ENCODE measurements at regions of chr1 and their contacts with region 1.

Region 1: DNA sequence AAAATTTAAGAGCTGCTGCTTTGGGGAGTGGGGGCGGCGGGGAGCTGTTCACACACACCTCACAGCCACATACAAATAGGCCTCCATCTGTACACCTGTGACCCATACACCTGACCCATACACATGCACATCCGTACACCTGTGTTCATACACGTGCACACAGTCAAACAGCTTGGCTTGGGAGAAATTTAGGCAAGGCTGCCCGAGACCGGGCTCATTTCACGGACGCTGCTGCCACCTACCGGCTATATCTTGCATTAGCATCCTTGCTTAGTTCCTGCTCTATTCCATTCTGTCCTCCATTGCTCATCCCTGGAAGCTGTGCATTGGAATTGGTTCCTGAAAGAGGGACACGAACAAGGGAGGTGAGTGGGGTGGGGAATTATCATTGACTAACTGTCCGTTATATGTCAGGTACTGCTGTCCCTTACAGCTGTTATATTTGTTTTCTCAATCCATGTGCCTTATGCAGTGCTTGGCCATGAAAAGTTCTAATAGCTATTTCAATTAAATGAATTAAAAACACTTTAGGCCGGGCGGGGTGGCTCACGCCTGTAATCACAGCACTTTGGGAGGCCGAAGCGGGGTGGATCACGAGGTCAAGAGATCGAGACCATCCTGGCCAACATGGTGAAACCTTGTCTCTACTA is 37.1 kb upstream of the EPB41 start:
- DNase-seq: peak; percentile 79
- CTCF ChIP-seq: peak; percentile 86

Region 2: DNA sequence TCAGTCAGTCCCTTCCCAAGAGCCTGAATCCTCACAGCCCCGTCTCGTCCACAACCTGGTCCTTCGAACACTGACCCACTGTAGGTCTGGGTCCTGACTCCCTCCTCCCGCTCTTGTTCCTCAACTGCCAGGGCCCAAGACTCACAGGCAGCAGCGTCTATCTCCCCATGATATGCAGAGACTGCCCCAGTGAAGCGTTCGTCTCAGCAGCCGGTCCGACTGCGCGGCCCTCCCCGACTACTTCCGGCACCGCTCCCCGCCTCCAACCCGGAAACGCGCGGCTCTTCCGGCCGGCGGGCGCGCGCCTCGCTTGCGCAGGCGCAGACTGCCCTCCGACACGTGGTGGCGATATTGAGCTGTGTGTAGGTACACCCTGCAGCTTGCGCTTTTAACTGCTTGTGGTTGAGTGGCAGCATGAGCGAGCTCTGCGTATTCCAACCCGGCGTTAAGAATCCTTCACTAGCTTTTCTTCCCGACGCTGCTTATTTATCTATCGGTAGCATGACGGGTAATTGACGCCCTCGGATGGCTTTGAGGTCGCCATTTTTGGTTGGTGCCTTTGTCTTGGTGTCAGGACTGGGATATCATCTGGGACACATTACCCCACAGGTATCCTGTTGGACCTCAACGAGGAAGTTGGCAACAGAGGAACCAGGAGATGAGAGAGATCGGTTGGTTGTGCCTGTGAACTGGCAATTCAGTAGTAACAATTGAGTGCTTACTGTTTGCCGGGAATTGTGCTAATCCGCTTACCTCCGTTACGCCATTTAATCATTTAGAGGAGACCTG is 234.2 kb before region 1 on chr1 and contains the start of gene TAF12:
- CTCF ChIA-PET with region 1: interaction called, 11 read pairs
- POLR2A ChIA-PET with region 1: interaction called, 5 read pairs
- DNase-seq: peak; percentile 90
- CTCF ChIP-seq: peak; percentile 56

Region 3: DNA sequence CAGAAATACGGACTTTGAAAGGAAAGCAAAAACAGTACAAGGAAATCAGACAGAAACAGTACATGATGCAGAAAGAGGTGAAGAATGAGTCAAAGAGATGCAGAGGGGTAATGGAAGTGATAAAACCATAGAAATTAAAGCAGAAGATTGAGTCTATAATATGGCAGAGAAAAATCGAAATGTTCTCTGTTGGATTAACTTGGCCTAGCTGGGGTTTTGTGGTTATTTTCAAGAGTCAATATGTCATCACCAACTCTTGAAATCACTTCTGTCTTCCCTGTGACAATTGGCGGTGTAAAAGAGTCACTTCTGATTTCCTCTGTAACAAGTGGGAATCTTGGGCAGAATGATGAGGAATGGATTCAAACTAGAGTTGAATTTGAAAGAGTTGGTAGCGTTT is 133.1 kb before region 1 on chr1:
- CTCF ChIA-PET with region 1: no interaction called
- POLR2A ChIA-PET with region 1: no interaction called
- DNase-seq: no peak
- CTCF ChIP-seq: no peak

Region 4: DNA sequence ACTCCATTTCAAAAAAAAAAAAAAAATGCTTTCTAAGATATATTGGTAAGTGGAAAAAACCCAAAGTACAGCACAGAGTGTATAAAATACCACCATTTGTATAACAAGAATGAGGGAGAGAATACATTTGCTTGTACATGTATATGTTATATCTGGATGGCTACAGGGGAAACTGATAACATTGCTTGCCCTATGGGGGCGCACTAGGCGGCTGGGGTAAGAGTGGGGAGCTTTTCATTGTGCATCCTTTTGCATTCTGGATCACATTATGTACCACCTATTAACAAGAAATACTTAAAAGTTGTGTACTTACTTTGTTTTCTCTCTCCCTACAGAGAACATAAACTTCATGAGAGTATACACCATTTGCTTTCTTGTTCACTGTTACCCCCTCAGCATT is 93.9 kb before region 1 on chr1:
- CTCF ChIA-PET with region 1: interaction called, 127 read pairs
- POLR2A ChIA-PET with region 1: no interaction called
- DNase-seq: no peak
- CTCF ChIP-seq: no peak

Region 5: DNA sequence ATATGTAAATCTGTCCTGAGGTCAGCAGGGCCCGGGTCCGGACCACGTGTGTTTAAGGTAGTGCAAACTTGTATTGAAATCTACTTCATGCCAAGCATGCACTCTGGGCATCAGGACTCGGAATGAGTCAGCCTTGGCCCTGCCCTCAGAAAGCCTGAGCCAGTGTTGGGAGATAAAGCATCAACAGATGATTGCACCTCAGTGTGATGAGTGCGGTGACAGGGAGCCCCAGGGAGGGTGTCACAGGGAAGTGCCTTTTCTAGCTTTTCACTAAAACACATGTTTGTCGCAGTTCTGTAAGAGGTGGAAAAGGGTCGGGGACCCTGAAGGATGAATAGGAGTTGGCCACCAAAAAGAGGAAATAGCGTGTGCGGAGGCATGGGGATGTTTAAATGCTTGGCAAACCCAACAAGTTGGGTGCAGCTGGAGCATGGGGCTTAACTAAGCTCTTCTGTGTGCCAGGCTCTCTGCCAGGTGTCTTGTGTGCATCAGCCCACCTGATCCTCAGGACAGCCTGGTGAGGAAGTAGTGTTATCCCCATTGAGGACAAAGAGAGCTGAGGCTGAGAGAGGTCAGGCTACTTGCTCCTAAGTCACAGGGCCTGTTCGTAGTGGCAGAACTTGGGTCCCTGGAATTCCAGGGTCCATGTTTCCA is 11.1 kb before region 1 on chr1:
- CTCF ChIA-PET with region 1: interaction called, 42 read pairs
- POLR2A ChIA-PET with region 1: no interaction called
- DNase-seq: no peak
- CTCF ChIP-seq: no peak

Region 6: GRCh38 chr1:28950449-28950848 is 73.2 kb after region 1 on chr1:
- CTCF ChIA-PET with region 1: no interaction called
- POLR2A ChIA-PET with region 1: no interaction called
- DNase-seq: no peak
- CTCF ChIP-seq: no peak

Region 7: GRCh38 chr1:29096231-29096886 is 219.1 kb after region 1 on chr1:
- CTCF ChIA-PET with region 1: no interaction called
- POLR2A ChIA-PET with region 1: no interaction called
- DNase-seq: no peak
- CTCF ChIP-seq: no peak

Region 8: DNA sequence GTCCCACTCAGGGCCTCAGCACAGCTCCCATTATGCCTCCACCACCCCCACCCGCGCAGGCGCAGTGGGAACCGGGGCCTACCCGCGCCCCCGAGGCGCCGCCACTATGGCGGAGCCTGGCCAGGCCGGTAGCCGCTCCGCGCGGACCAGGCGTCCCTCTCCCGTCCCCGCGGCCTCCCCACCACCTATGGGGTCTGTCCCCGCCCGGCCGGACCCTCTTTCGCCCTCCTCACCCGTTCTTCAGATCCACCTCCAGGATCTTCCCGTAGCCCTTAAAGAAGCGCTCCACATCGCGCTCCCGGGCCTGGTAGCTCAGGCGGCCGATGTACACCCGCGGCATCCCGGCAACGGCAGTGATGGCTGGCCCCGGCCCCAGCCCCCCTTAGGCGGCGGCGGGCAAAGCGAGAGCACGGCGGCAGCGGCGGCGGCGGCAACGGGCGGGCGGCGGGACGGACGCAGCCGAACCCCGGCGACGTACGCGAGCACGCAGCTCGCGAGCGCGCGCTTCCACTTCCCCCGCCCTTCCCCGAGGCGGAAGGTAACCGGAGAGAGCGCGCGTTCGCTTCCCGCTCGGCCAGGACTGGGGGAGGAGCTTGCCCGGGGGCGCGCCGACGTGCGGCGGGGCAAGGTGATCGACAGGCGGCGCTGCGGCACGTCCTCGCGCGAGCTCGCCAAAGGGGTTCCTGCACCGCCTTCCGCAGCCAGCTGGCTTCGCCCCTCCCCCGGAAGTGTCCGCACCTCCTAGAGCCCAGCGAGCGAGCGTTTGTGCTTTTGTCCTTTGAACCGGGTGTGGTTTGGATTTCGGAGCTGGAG is 304.4 kb after region 1 on chr1 and contains the start of gene SRSF4:
- CTCF ChIA-PET with region 1: interaction called, 13 read pairs
- POLR2A ChIA-PET with region 1: no interaction called
- DNase-seq: peak; percentile 99
- CTCF ChIP-seq: peak; percentile 84